ENCODE measurements at regions of chr10 and their contacts with region 1.

Region 1: GRCh38 chr10:42866115-42866995 is 83.8 kb downstream of the BMS1 start:
- DNase-seq: peak; percentile 78
- ATAC-seq: peak; percentile 100
- H3K4me3 ChIP-seq: peak overlapping the region; percentile 64
- H3K27ac ChIP-seq: no peak overlapping the region
- H3K4me1 ChIP-seq: 0 out of 2 replicates have a peak, but pooled peaks cover 4% of the 10 kb centered on the region
- H3K27me3 ChIP-seq: peaks cover 34% of the 10 kb centered on the region
- CTCF ChIP-seq: peak; percentile 69

Region 2: DNA sequence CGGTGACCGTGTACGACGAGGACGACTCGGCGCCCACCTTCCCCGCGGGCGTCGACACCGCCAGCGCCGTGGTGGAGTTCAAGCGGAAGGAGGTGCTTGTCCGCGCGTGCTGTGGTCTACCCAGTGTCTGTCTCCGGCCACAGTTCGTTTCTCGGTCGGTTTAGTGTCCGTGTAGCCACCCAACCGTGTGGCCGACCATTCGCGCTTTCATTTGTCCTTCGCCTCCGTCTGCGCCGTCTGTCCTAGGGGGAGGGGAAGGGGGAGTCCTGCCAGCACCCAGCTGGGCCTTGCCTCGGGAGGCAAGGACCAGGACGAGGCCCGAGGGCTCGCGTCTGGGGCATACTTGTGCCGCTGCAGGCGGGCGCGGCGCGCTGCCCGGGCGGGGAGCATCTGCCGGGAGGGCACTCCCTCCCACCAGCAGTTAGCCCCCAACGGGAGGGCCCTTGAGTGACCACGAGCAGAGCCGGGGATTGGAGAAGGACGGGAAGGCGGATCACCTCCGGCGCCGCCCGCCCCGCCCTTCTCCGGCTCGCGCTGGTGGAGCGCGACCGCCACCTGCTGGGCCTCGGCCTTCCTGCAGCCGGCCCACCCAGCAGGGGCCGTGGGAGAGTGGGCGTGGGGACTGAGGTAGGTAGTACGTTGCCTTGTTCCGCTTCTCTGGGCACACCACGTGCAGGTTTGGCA is 238.9 kb after region 1 on chr10:
- CTCF ChIA-PET with region 1: no interaction called
- POLR2A ChIA-PET with region 1: no interaction called
- intact Hi-C with region 1: loop called (anchors 1 kb)
- DNase-seq: peak; percentile 78
- ATAC-seq: peak; percentile 93
- H3K4me3 ChIP-seq: peak overlapping the region; percentile 66
- H3K27ac ChIP-seq: no peak overlapping the region
- H3K4me1 ChIP-seq: 0 out of 2 replicates have a peak, but pooled peaks cover 4% of the 10 kb centered on the region
- H3K27me3 ChIP-seq: peaks cover 4% of the 10 kb centered on the region; the same call in 1 of the 2 replicates
- CTCF ChIP-seq: peak; percentile 98

Region 3: DNA sequence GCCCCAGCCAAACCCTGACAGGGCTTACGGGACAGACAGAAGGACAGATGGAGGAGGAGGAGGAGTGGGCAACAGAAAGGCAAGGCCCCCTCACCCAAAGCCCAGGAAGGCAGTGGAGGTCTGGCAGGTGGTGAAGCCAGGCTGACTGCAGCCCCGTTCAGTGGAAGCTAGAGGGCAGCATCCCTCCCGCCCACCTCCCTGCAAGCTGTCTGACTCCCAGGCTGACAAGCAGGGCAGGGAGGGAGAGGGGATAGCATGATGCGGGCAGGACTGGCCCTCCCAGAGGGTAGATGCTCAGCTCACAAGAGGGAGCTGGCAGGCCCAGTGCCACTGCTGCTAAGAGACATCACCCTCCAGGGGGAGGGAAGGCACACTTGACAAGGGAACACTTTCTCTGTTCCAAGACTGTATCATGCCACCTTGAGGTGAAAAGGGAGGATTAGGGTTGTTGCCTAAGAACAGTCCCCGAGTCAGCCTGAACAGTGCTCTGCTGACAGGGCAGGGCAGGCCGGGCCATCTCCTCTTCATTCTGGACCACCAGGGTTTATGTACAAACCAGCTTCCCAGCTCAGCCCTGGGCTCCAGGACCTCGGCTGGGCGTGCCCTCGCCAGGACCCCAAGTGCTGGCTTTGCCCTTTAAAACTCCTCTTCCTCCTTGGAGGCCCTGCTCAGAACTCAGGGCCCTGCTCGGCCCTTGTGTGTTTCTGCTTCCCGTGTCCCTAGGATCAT is 338.8 kb after region 1 on chr10:
- CTCF ChIA-PET with region 1: no interaction called
- POLR2A ChIA-PET with region 1: no interaction called
- intact Hi-C with region 1: loop called (anchors 5 kb)
- DNase-seq: peak; percentile 70
- ATAC-seq: peak; percentile 89
- H3K4me3 ChIP-seq: no peak overlapping the region
- H3K27ac ChIP-seq: no peak overlapping the region
- H3K4me1 ChIP-seq: no peaks in the 10 kb centered on the region
- H3K27me3 ChIP-seq: no peaks in the 10 kb centered on the region
- CTCF ChIP-seq: peak; percentile 98

Region 4: DNA sequence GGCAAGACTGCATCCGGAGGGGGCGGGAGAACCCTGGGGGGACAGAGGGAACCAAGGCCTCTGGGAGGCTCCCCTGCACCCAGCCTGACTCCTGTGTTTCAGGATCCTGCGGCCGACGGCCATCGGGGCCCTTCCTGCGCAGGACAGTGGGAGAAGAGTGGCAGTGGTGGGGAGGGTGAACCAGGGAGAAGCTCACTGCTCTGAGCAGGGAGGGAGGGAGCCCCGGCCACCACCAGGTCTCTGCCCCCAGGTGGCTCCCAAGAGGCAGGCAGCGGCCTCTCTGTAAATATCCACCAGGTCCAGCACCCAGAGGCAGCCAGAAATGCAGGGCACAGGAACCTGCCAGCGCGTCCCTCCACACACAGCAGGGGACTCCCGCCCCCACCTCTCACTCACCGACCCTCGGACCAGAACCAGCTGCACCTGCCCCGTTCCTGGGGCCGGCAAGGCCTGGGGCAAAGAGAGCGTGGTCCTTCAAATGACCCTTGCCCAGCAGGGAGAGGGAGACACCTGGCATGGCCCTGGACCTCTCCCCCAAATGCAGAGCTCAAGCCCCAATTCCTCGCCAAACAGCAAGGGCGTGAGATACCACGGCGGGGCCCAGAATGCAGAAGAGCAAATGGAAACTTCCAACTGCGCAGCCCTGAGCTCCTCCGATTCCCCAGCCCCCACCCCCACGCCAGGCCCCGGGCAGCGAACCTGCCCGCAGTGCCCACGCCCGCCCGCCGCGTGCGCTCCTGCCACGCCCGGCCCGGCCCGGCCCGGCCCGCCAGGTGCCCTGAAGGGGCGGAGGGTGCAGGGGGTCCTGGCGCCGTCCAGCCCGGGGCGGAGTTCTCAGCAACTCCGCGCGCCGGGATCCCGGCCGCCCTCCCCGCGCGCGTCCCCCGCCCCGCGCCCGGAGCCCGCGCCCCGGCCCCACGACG is 399.7 kb after region 1 on chr10:
- CTCF ChIA-PET with region 1: no interaction called
- POLR2A ChIA-PET with region 1: no interaction called
- intact Hi-C with region 1: loop called (anchors 10 kb)
- DNase-seq: peak; percentile 57
- ATAC-seq: peak; percentile 88
- H3K4me3 ChIP-seq: 0 out of 2 replicates have a peak overlapping the region, but pooled peaks have one; percentile 9
- H3K27ac ChIP-seq: no peak overlapping the region
- H3K4me1 ChIP-seq: no peaks in the 10 kb centered on the region
- H3K27me3 ChIP-seq: peaks cover 64% of the 10 kb centered on the region
- CTCF ChIP-seq: peak; percentile 60

Region 5: GRCh38 chr10:43348511-43349312 is 482.4 kb after region 1 on chr10:
- CTCF ChIA-PET with region 1: no interaction called
- POLR2A ChIA-PET with region 1: no interaction called
- intact Hi-C with region 1: loop called (anchors 5 kb)
- DNase-seq: peak; percentile 91
- ATAC-seq: peak; percentile 99
- H3K4me3 ChIP-seq: no peak overlapping the region
- H3K27ac ChIP-seq: no peak overlapping the region
- H3K4me1 ChIP-seq: peaks cover 28% of the 10 kb centered on the region
- H3K27me3 ChIP-seq: no peaks in the 10 kb centered on the region
- CTCF ChIP-seq: peak; percentile 99